ENCODE measurements at regions of chr5 and their contacts with region 1.

Region 1: GRCh38 chr5:148791334-148791667 is 35.1 kb upstream of the ADRB2 start:
- DNase-seq: peak; percentile 43
- CTCF ChIP-seq: no peak

Region 2: DNA sequence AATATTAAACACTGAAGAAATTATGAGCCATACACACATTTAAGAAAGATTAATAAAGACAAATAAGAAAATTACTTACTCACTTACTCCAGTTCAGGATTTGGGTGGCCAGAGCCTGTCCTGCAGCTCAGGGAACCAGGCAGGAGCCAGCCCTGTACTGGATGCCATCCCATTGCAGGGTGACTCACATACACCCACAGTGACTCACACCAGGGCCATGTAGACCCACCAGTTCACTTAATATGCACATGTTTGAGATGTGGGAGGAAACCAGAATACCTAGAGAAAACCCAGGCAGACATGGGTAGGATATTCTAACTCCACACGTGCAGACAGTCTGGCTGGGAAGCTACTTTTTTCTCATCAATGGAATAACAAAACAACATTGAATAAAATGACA is 14.5 kb before region 1 on chr5:
- CTCF ChIA-PET with region 1: interaction called, 37 read pairs
- POLR2A ChIA-PET with region 1: no interaction called
- DNase-seq: no peak
- CTCF ChIP-seq: no peak

Region 3: DNA sequence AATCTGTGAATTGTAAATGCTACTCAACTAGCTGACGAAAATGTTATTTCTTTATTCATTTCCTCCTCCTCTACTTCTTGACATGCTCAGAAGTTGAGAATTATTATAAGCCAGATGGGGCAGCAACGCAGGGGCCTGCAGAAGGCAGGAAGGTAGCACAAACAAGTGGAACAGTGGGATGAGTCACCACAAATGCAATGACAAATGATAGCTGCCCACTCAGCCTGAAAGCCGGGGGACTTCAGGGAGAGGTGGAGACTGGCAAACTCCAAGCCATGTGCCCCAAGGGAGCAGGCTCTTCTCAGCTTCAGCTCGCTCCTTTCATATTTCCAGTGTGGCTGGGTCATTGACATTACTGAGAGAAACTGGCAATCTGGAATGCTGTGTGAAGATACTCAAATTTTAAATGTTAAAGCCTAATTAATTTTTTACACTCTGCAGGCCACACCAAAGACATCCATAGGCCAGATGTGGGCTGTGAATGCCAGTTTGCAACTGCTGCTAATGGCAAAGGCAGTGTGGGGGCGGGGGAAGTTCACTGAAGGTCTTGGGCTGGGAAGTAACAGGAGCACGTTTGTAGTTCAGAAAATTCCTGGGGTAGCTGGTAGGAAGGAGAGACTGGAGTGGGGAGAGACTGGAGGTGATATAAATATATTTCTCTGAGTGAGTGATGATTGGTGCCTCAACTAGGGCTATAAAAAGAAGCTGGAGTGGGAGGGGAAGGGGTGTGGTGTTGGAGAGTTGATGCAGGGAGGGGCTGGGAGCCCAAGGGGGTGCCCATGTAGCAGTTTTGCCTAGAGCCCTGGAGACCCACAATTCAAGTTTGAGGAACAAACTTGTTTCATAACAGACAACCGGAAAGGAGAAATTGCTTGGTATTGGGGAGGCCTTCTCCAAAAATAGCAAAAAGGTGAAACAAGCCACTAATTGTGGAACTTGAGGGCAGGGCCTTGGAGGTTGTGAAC is 14.3 kb after region 1 on chr5:
- CTCF ChIA-PET with region 1: interaction called, 14 read pairs
- POLR2A ChIA-PET with region 1: no interaction called
- DNase-seq: peak; percentile 30
- CTCF ChIP-seq: no peak

Region 4: DNA sequence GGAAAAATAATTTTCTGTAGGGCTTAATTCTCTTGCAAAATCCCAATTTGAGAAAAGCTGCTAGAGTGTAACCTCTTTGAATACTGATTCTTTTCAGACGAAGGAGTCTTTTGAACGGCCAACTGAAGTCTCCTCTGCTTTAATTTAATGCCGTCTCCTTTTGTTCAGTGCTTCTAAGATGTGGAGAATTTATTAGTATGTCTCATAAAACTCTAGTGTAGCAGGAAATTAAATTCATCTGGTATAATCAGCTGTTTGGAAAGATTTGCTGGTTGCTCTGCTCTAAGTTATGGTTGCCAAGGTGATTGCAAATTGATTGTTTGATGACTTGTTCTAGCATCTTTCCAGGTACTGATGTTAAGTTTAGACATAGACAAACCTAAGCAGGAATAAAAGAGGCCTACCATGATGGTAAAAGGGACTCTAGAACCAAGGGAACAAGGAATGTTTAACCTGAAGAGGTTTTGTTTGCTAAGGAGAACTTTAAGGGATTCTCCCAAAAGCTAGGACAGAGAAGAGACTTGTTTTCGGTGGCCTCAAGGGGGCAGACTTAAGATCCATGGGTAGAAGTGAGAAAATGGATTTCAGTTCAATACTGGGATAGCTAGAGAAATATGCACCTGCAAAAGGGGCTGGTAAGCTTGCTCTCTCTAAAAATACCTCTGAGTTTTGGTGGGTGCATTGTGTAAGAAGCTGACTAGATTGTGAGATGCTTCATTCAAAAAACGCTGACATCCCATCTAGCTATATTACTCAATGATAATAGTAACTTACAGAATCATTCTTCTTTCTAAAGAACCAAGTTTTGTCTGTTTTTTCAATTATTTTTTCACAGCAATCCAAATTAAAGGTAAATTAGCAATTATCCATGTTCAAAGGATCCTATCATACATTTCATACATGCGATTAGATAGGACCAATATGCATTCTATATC is 29.4 kb after region 1 on chr5:
- CTCF ChIA-PET with region 1: interaction called, 10 read pairs
- POLR2A ChIA-PET with region 1: no interaction called
- DNase-seq: no peak
- CTCF ChIP-seq: peak; percentile 52